ENCODE measurements at regions of chr1 and their contacts with region 1.

Region 1: GRCh38 chr1:20640183-20640597 is 6.9 kb downstream of the PINK1 start:
- DNase-seq: peak; percentile 17 to 82 (median 47)
- ATAC-seq: peak; percentile 88
- H3K4me3 ChIP-seq: no peak overlapping the region
- H3K4me3 Mint-ChIP-seq: no peak overlapping the region
- H3K27ac ChIP-seq: no peak overlapping the region
- H3K27ac Mint-ChIP-seq: no peak overlapping the region
- H3K4me1 ChIP-seq: no peaks in the 10 kb centered on the region
- H3K4me1 Mint-ChIP-seq: peaks cover 6% of the 10 kb centered on the region
- H3K27me3 ChIP-seq: no peaks in the 10 kb centered on the region
- H3K27me3 Mint-ChIP-seq: no peaks in the 10 kb centered on the region
- CTCF ChIP-seq: peak; percentile 88

Region 2: DNA sequence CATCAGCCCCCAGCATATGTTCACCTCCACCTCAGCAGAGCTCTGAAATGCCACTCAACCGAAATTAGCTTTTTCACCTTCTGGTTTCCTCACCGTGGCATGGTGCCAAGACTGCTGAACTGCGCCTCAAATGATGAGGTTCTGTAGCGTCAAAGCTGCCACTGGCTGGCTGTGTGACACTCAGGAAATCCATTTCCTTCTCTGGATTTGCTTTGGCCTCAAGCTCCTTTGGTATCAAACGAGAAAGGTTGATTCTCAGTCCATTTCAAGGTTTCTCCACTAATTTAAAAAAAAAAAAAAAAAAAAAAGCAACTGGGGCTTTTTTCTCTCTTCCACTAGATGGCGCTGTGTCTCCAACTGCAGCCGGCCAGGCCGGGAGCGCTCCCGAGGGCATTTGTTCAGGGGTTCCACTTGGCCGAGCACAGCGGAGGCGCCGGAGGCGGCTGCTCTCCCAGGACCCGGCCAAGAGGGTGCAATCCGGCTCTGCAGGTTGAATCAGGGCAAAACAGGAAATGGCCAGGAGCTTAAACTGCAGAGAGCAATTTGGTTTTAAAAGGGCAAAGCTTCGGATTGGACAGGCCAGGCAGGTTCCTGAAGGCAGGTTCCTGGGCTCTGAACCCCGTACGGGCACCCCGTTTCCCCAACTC is 427.4 kb before region 1 on chr1:
- CTCF ChIA-PET with region 1: no interaction called
- POLR2A ChIA-PET with region 1: no interaction called
- intact Hi-C with region 1: loop called in 1 of 2 experiments (anchors 10 kb)
- DNase-seq: peak; percentile 11 to 77 (median 40)
- ATAC-seq: no peak
- H3K4me3 ChIP-seq: no peak overlapping the region
- H3K4me3 Mint-ChIP-seq: no peak overlapping the region
- H3K27ac ChIP-seq: no peak overlapping the region
- H3K27ac Mint-ChIP-seq: no peak overlapping the region
- H3K4me1 ChIP-seq: peaks cover 13% of the 10 kb centered on the region
- H3K4me1 Mint-ChIP-seq: no peaks in the 10 kb centered on the region
- H3K27me3 ChIP-seq: peaks cover 12 to 18% of the 10 kb centered on the region in 2 experiments
- H3K27me3 Mint-ChIP-seq: peaks cover 60% of the 10 kb centered on the region
- CTCF ChIP-seq: peak; percentile 81

Region 3: GRCh38 chr1:20521960-20522861 is 118.0 kb before region 1 on chr1:
- CTCF ChIA-PET with region 1: no interaction called
- POLR2A ChIA-PET with region 1: no interaction called
- intact Hi-C with region 1: loop called (anchors 1 kb)
- DNase-seq: peak; percentile 38 to 77 (median 59)
- ATAC-seq: peak; percentile 63
- H3K4me3 ChIP-seq: no peak overlapping the region
- H3K4me3 Mint-ChIP-seq: no peak overlapping the region
- H3K27ac ChIP-seq: no peak overlapping the region
- H3K27ac Mint-ChIP-seq: no peak overlapping the region
- H3K4me1 ChIP-seq: no peaks in the 10 kb centered on the region
- H3K4me1 Mint-ChIP-seq: no peaks in the 10 kb centered on the region
- H3K27me3 ChIP-seq: peaks cover under 1 to 4% of the 10 kb centered on the region in 2 experiments
- H3K27me3 Mint-ChIP-seq: peaks cover 37% of the 10 kb centered on the region
- CTCF ChIP-seq: peak; percentile 79

Region 4: DNA sequence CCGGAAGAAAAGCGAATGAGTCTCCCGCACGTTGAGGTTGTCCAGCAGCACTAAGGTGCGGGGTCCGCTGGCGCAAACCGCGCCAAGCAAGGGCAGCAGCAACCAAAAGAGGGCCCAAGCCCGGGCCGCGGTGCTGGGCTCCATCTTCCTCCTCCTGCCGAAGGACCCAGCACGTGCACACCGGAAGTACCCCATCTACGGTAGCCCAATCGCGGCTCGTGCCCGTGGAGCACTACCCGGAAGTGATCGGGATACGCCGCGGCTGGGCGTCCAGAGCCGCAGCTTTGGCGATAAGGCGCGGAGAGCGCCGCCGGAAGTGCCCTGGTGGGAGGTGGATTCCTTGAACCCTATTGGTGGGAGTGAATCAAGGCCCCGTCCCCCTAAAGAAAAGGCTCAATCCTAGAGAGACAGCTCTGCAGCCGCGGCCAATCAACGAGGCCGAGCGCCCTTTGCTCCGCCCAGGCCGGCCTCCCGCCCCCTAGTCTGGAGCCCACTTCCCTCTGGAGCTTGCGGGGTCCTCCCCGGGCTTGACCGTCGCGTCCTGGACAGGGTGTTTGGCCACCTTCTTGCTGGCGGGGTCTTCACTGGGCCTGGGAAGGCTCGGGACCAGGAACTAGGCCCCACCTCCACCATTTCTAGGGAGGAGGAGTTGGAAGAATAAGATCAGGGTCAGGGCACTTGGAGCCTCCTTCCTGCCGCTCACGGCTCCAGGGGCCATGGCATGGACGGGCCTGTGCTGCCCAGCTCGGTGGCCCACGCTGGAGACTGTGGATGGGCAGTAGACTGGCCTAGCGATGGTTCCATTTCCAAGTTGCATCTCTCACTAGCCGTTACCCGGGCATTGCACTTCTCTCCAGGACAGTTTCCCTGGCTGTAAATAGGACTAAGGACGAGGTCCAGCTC is 21.3 kb after region 1 on chr1 and contains the start of gene DDOST:
- CTCF ChIA-PET with region 1: no interaction called
- POLR2A ChIA-PET with region 1: interaction called, 6 read pairs
- intact Hi-C with region 1: loop called in 1 of 2 experiments (anchors 2 kb)
- DNase-seq: peak; percentile 86 to 98 (median 93)
- ATAC-seq: peak; percentile 96
- H3K4me3 ChIP-seq: peak within 1 kb of the TSS; percentile 99
- H3K4me3 Mint-ChIP-seq: peak within 1 kb of the TSS; percentile 97
- H3K27ac ChIP-seq: peak within 1 kb of the TSS; percentile 77 to 84
- H3K27ac Mint-ChIP-seq: peak within 1 kb of the TSS; percentile 88
- H3K4me1 ChIP-seq: peaks cover 45% of the 10 kb centered on the region
- H3K4me1 Mint-ChIP-seq: peaks cover 50% of the 10 kb centered on the region
- H3K27me3 ChIP-seq: no peaks in the 10 kb centered on the region
- H3K27me3 Mint-ChIP-seq: no peaks in the 10 kb centered on the region
- CTCF ChIP-seq: peak; percentile 54
- total RNA-seq, gene DDOST: 96.1 to 101 TPM

Region 5: DNA sequence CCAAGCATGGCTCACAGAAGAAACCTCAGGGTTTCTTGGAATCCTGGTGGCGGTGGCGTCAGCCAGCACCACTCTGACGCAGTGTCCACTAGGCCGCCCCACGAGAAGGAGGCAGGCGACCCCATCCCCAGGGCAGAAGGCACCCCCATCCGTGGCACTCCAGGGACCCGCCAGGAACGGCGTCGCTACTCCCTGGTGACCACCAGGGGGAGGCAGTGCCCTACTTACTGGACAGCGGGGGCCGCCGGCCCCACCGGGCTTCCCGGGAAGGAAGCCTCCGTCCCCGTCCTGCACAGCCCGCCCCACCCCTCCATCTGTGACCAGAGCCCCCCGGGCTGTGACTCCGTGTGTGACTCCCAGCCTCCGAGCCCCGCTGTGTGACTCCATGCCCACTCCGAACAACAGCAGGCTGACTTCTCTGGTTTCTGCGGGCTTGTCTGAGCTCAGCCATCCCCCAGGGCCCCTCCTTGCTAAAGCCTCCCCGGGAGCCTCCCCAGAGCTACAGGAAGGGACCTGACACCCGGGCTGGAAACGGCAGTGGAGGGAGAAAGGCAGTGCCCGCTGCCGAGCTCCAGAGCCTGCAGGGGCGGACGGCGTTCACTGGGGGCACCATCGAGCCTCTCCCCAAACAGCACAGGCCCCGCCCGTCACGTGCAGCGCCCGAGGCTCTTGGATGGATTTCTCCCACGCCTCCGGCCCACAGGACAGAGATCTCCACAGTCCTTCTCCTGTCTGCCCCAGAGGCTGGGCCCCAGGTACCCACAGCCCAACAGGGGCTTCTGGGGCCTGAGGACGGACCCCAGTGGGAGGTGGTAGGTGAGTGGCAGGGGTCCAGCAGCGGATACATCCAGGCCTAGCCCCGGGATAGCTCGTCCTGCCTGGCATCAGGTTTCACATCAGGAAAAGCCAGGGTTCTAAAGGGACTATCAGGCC is 56.5 kb after region 1 on chr1:
- CTCF ChIA-PET with region 1: no interaction called
- POLR2A ChIA-PET with region 1: no interaction called
- intact Hi-C with region 1: no loop called
- DNase-seq: peak; percentile 54 to 85 (median 65)
- ATAC-seq: peak; percentile 98
- H3K4me3 ChIP-seq: peak overlapping the region; percentile 86
- H3K4me3 Mint-ChIP-seq: peak overlapping the region; percentile 91
- H3K27ac ChIP-seq: no peak overlapping the region
- H3K27ac Mint-ChIP-seq: no peak overlapping the region
- H3K4me1 ChIP-seq: peaks cover 13% of the 10 kb centered on the region
- H3K4me1 Mint-ChIP-seq: peaks cover 5% of the 10 kb centered on the region
- H3K27me3 ChIP-seq: no peaks in the 10 kb centered on the region
- H3K27me3 Mint-ChIP-seq: no peaks in the 10 kb centered on the region
- CTCF ChIP-seq: peak; percentile 99

Region 6: DNA sequence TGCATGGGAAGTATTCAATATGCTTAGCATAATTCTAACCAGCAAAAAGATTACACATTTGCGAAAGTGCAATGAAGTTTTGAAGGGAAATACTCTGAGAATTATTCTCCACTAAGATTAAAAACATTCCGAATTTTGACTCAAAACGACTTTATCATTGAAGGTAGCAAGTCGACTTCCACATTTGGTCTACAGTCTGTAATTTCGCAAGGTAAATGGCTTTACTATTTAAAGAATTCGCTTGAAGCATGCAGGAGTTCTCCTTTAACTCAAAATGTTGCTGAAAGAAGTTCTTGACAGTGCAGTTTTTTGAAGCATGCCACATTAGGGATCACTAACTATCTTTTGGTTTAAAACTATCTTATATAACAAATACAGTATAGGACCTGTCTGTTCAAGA is 307.9 kb after region 1 on chr1:
- CTCF ChIA-PET with region 1: no interaction called
- POLR2A ChIA-PET with region 1: no interaction called
- intact Hi-C with region 1: no loop called
- DNase-seq: no peak
- ATAC-seq: no peak
- H3K4me3 ChIP-seq: no peak overlapping the region
- H3K4me3 Mint-ChIP-seq: no peak overlapping the region
- H3K27ac ChIP-seq: no peak overlapping the region
- H3K27ac Mint-ChIP-seq: no peak overlapping the region
- H3K4me1 ChIP-seq: no peaks in the 10 kb centered on the region
- H3K4me1 Mint-ChIP-seq: no peaks in the 10 kb centered on the region
- H3K27me3 ChIP-seq: no peaks in the 10 kb centered on the region
- H3K27me3 Mint-ChIP-seq: no peaks in the 10 kb centered on the region
- CTCF ChIP-seq: no peak